H1 (cell line): ENCODE measurements at regions of chr10 and their contacts with region 1.

Region 1: DNA sequence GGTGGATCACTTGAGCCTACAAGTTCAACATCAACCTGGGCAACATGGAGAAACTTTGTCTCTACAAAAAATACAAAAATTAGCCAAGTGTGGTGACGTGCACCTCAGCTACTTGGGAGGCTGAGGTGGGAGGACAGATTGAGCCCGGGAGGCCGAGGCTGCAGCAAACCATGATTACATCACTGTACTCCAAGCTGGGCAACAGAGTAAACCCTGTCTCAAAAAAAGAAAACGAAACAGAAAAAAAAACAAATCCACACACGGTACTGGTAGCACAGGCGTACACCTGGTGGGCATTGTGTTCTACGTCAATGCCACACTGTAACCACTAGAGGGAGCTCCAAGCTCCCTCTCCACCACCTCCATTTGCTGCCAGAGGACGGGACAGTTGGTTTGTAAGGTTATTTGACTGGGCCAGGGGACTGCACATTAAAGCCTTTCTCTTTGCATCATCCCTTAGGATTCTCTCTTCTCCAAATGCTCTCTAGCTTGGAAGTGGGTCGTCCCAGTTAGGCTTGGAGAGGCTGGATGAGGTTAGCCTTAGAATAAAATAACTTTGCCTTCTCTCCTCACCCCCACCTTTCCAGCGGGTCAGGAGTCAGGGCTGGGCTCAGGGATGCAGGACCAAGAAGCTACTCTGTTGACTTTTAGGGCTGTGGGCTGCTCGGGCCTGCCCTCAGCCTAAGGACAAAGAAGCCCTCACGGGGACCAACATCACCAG is 130.8 kb downstream of the SORBS1 start:
- DNase-seq: peak in 1 of 2 experiments; percentile 61
- H3K4me3 ChIP-seq: no peak overlapping the region
- H3K27ac ChIP-seq: no peak overlapping the region
- H3K4me1 ChIP-seq: peaks cover 0 to 2% (median 0%) of the 10 kb centered on the region in 4 experiments; a peak in 2 of 7 replicates
- H3K27me3 ChIP-seq: no peaks in the 10 kb centered on the region
- CTCF ChIP-seq: peak; percentile 91 to 98 (median 96)
- EP300 ChIP-seq: no peak
- POLR2A ChIP-seq: no peak
- RAD21 ChIP-seq: peak; percentile 98 to 99

Region 2: GRCh38 chr10:95391581-95392216 is 38.7 kb before region 1 on chr10:
- CTCF ChIA-PET with region 1: interaction called, 22 read pairs
- POLR2A ChIA-PET with region 1: no interaction called
- DNase-seq: no peak
- H3K4me3 ChIP-seq: no peak overlapping the region
- H3K27ac ChIP-seq: no peak overlapping the region
- H3K4me1 ChIP-seq: peaks cover 0 to 3% (median 0%) of the 10 kb centered on the region in 4 experiments; a peak in 3 of 7 replicates
- H3K27me3 ChIP-seq: no peaks in the 10 kb centered on the region
- CTCF ChIP-seq: peak in 2 of 3 experiments; percentile 23 to 24; a peak in 2 of 4 replicates
- EP300 ChIP-seq: no peak
- POLR2A ChIP-seq: no peak
- RAD21 ChIP-seq: peak in 1 of 2 experiments; percentile 17; a peak in 1 of 4 replicates

Region 3: GRCh38 chr10:95469676-95470075 is 39.3 kb after region 1 on chr10:
- CTCF ChIA-PET with region 1: interaction called, 24 read pairs
- POLR2A ChIA-PET with region 1: no interaction called
- DNase-seq: no peak
- H3K4me3 ChIP-seq: no peak overlapping the region
- H3K27ac ChIP-seq: no peak overlapping the region
- H3K4me1 ChIP-seq: peaks cover 2 to 18% (median 14%) of the 10 kb centered on the region in 4 experiments; a peak in 6 of 7 replicates
- H3K27me3 ChIP-seq: no peaks in the 10 kb centered on the region
- CTCF ChIP-seq: no peak
- EP300 ChIP-seq: no peak
- POLR2A ChIP-seq: no peak
- RAD21 ChIP-seq: no peak

Region 4: DNA sequence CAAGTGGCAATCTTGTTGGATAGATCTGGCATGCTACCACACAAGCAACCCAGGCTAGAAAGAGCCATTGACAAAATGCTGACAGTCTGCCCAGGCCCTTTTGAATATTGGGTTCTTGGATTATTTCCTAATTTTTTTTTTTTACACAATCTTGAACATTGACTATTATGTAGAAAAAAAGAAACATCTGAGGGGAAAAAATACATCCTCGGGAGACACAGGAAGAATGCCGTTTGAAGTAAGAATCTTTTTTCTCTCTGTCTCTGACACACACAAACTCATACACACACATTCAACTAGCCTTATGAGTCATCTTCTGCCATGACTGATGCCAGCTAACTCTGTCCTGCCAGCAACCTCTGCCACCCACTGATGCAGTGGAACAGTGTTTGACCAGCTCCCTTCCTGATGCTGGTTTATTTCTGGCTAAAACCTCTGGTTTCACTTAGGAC is 83.6 kb after region 1 on chr10:
- CTCF ChIA-PET with region 1: interaction called, 12 read pairs
- POLR2A ChIA-PET with region 1: no interaction called
- DNase-seq: no peak
- H3K4me3 ChIP-seq: no peak overlapping the region
- H3K27ac ChIP-seq: no peak overlapping the region
- H3K4me1 ChIP-seq: peaks cover 3 to 16% (median 5%) of the 10 kb centered on the region in 4 experiments
- H3K27me3 ChIP-seq: no peaks in the 10 kb centered on the region
- CTCF ChIP-seq: no peak
- EP300 ChIP-seq: no peak
- POLR2A ChIP-seq: no peak
- RAD21 ChIP-seq: no peak

Region 5: GRCh38 chr10:95579835-95580535 is 149.6 kb after region 1 on chr10:
- CTCF ChIA-PET with region 1: interaction called, 20 read pairs
- POLR2A ChIA-PET with region 1: no interaction called
- DNase-seq: no peak
- H3K4me3 ChIP-seq: no peak overlapping the region
- H3K27ac ChIP-seq: no peak overlapping the region
- H3K4me1 ChIP-seq: no peaks in the 10 kb centered on the region
- H3K27me3 ChIP-seq: no peaks in the 10 kb centered on the region
- CTCF ChIP-seq: no peak
- EP300 ChIP-seq: no peak
- POLR2A ChIP-seq: no peak
- RAD21 ChIP-seq: no peak

Region 6: GRCh38 chr10:95613330-95613729 is 182.9 kb after region 1 on chr10:
- CTCF ChIA-PET with region 1: interaction called, 16 read pairs
- POLR2A ChIA-PET with region 1: no interaction called
- DNase-seq: no peak
- H3K4me3 ChIP-seq: no peak overlapping the region
- H3K27ac ChIP-seq: no peak overlapping the region
- H3K4me1 ChIP-seq: no peaks in the 10 kb centered on the region
- H3K27me3 ChIP-seq: no peaks in the 10 kb centered on the region
- CTCF ChIP-seq: no peak
- EP300 ChIP-seq: no peak
- POLR2A ChIP-seq: no peak
- RAD21 ChIP-seq: no peak